Activated CD4-positive, alpha-beta T cell treated with anti-CD3 and anti-CD28 coated beads, Interleukin-2, amount 10 ng/mL, durations not matched to agents 7 days and 5 days (primary cell): ENCODE measurements at regions of chr9 and their contacts with region 1.

Region 1: GRCh38 chr9:4339357-4339756 is 39.5 kb upstream of the GLIS3 start:
- DNase-seq: peak; percentile 85
- H3K4me3 Mint-ChIP-seq: peak overlapping the region; percentile 32
- H3K27ac Mint-ChIP-seq: peak overlapping the region; percentile 22
- H3K4me1 Mint-ChIP-seq: peaks cover 3% of the 10 kb centered on the region
- H3K27me3 Mint-ChIP-seq: peaks cover 2% of the 10 kb centered on the region

Region 2: GRCh38 chr9:4327504-4328191 is 11.7 kb before region 1 on chr9:
- CTCF ChIA-PET with region 1: interaction called, 11 read pairs
- POLR2A ChIA-PET with region 1: no interaction called
- DNase-seq: no peak
- H3K4me3 Mint-ChIP-seq: no peak overlapping the region
- H3K27ac Mint-ChIP-seq: no peak overlapping the region
- H3K4me1 Mint-ChIP-seq: peaks cover 5% of the 10 kb centered on the region
- H3K27me3 Mint-ChIP-seq: no peaks in the 10 kb centered on the region

Region 3: GRCh38 chr9:4366591-4367330 is 27.4 kb after region 1 on chr9:
- CTCF ChIA-PET with region 1: interaction called, 10 read pairs
- POLR2A ChIA-PET with region 1: no interaction called
- DNase-seq: peak; percentile 29
- H3K4me3 Mint-ChIP-seq: no peak overlapping the region
- H3K27ac Mint-ChIP-seq: no peak overlapping the region
- H3K4me1 Mint-ChIP-seq: no peaks in the 10 kb centered on the region
- H3K27me3 Mint-ChIP-seq: peaks cover 4% of the 10 kb centered on the region